GM12878 (cell line): ENCODE measurements at regions of chr4 and their contacts with region 1.

Region 1: DNA sequence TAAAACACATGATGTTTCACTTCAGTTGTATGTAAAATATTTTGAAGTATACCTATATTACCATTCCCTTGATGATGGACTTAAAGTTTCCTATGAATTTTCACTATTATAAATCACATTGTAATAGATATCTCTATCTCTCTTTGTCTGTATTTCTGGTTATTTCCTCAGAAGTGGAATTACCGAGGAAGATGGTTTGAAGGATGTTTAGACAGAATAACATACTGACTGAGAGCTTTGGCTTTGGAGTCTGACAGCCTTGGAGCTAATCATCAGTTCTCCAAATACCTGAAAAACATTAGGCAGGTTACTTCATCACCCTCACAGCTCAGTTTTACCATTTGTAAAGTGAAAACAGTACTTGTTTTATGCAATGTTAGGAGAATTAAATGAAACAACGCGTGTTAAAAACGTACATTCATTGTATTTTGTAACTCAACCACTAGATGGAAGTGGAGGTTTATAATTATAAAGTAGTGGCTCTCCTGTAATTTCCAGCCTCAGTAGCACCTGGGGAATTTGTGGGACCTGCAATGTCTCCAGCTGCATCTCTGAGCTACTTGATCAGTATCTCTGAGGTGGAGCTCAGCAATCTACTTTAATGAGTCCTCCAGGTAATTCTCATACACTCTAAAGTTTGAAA is 14.3 kb downstream of the JCHAIN start:
- DNase-seq: no peak
- ATAC-seq: peak; percentile 68
- H3K4me3 ChIP-seq: no peak overlapping the region
- H3K27ac ChIP-seq: no peak overlapping the region
- H3K4me1 ChIP-seq: no peaks in the 10 kb centered on the region
- H3K27me3 ChIP-seq: no peaks in the 10 kb centered on the region
- CTCF ChIP-seq: peak; percentile 20 to 60 (median 52); a peak in 4 of 6 replicates
- EP300 ChIP-seq: no peak
- POLR2A ChIP-seq: no peak
- RAD21 ChIP-seq: peak; percentile 72

Region 2: DNA sequence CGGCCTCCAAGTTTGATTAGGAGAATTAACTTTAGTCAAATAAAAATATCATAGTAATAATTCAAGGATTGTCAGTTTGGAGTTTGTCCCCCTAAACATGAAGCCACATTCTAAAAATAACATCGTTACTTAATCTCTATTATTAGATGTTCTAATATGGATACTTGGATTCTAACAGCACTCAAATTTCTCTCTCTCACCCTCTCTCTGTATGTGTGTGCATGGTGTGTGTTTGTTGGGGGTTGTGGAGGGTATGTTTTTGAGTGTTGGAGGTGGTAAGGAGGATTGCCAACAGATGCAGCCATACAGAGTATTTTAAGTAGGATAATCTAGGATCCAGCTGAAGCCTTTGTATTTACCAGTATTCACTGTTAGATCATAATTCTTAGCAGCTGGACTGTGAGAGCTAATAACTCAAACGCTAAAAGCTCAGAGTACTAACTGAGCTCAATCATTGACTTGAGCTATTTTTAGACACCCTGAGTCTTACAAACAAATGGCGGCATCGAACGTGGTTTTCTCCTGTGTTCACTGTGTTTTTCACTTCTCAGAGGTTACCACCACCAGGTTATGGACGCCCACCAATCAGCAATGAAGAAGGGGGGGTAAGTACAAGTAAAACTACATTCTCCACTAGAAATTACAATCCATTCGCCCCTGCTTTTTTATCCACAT is 14.6 kb before region 1 on chr4:
- CTCF ChIA-PET with region 1: interaction called, 11 read pairs
- POLR2A ChIA-PET with region 1: no interaction called
- RAD21 ChIA-PET with region 1: interaction called, 3 read pairs
- SMC1A ChIA-PET with region 1: interaction called, 10 read pairs
- in situ Hi-C with region 1: no loop called
- intact Hi-C with region 1: no loop called
- DNase-seq: no peak
- ATAC-seq: peak; percentile 52
- H3K4me3 ChIP-seq: no peak overlapping the region
- H3K27ac ChIP-seq: no peak overlapping the region
- H3K4me1 ChIP-seq: no peaks in the 10 kb centered on the region; the same call in 1 of the 2 replicates
- H3K27me3 ChIP-seq: no peaks in the 10 kb centered on the region
- CTCF ChIP-seq: no peak
- EP300 ChIP-seq: no peak
- POLR2A ChIP-seq: no peak
- RAD21 ChIP-seq: no peak

Region 3: DNA sequence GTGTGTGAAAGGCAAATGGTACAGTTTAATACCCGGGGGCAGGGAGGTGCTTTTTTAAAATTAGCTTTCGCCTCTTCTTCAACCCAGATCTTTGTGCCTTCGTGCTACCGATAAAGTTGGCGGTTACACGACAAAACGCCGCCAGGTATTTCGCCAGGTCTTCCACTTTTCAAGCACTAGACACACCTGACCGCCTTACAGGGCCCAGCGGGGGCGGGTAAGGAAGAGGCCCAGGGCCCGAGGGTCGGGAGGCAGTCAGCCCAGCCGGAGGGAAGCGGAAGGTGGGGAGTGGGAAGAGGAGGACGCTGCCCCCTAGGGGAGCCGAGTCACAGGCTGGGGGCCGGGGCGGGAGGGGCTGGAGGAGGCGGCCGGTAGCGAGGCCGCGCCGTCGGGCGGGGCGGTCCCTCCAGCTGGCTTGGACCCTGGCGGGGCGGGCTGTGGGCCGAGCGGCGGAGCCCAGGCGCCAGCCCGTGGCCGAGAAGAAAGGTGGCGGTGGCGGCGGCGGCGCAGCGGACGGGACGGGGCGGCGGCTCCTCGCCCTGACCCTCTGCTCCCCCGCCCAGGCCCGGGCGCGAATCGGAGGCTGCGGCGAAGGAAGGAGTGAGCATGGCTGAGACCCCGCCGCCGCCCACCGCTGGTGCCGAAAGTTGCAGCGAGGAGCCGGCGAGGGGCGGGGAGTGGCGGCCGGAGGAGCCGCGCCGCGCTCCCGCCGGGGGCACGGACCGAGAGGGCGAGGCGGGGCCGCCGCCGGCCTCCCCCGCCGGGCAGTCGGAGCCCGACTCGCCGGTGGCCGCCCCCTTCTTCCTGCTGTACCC is 52.6 kb after region 1 on chr4:
- CTCF ChIA-PET with region 1: interaction called, 22 read pairs
- POLR2A ChIA-PET with region 1: no interaction called
- RAD21 ChIA-PET with region 1: interaction called, 11 read pairs
- SMC1A ChIA-PET with region 1: interaction called, 10 read pairs
- in situ Hi-C with region 1: no loop called
- intact Hi-C with region 1: no loop called
- DNase-seq: no peak
- ATAC-seq: peak; percentile 77
- H3K4me3 ChIP-seq: peak overlapping the region; percentile 92
- H3K27ac ChIP-seq: peak overlapping the region; percentile 50
- H3K4me1 ChIP-seq: no peaks in the 10 kb centered on the region; the same call in 1 of the 2 replicates
- H3K27me3 ChIP-seq: no peaks in the 10 kb centered on the region
- CTCF ChIP-seq: peak; percentile 28 to 47 (median 47); a peak in 4 of 6 replicates
- EP300 ChIP-seq: no peak
- POLR2A ChIP-seq: peak; percentile 18; the same call in 1 of the 2 replicates
- RAD21 ChIP-seq: peak; percentile 32; the same call in 1 of the 2 replicates

Region 4: GRCh38 chr4:71004281-71004851 is 352.4 kb after region 1 on chr4:
- CTCF ChIA-PET with region 1: interaction called, 22 read pairs
- POLR2A ChIA-PET with region 1: no interaction called
- RAD21 ChIA-PET with region 1: interaction called, 4 read pairs
- SMC1A ChIA-PET with region 1: interaction called, 18 read pairs
- in situ Hi-C with region 1: no loop called
- intact Hi-C with region 1: loop called (anchors 2 kb)
- DNase-seq: no peak
- ATAC-seq: peak; percentile 74
- H3K4me3 ChIP-seq: peak overlapping the region; percentile 45; the same call in 1 of the 2 replicates
- H3K27ac ChIP-seq: peak overlapping the region; percentile 24; the same call in 1 of the 2 replicates
- H3K4me1 ChIP-seq: peaks cover 9% of the 10 kb centered on the region
- H3K27me3 ChIP-seq: no peaks in the 10 kb centered on the region
- CTCF ChIP-seq: peak in 1 of 3 experiments; percentile 26; a peak in 1 of 6 replicates
- EP300 ChIP-seq: no peak
- POLR2A ChIP-seq: no peak
- RAD21 ChIP-seq: peak; percentile 47